H1 (cell line): ENCODE measurements at regions of chr16 and their contacts with region 1.

Region 1: GRCh38 chr16:4392382-4393239 is 21.0 kb downstream of the VASN start:
- DNase-seq: peak; percentile 59 to 89
- H3K4me3 ChIP-seq: peak overlapping the region in 2 of 4 experiments; percentile 10 to 25; a peak in 2 of 8 replicates
- H3K27ac ChIP-seq: peak overlapping the region; percentile 90
- H3K4me1 ChIP-seq: peaks cover 12 to 50% (median 43%) of the 10 kb centered on the region in 4 experiments
- H3K27me3 ChIP-seq: no peaks in the 10 kb centered on the region
- CTCF ChIP-seq: no peak; a peak in 1 of 4 replicates
- EP300 ChIP-seq: peak; percentile 8 to 91
- POLR2A ChIP-seq: peak in 1 of 2 experiments; percentile 55; a peak in 2 of 3 replicates
- RAD21 ChIP-seq: no peak

Region 2: GRCh38 chr16:4271176-4272066 is 121.2 kb before region 1 on chr16:
- CTCF ChIA-PET with region 1: interaction called, 3 read pairs
- POLR2A ChIA-PET with region 1: interaction called, 13 read pairs
- DNase-seq: peak in 1 of 2 experiments; percentile 91
- H3K4me3 ChIP-seq: peak overlapping the region; percentile 68 to 97 (median 84)
- H3K27ac ChIP-seq: peak overlapping the region; percentile 96
- H3K4me1 ChIP-seq: peaks cover 3 to 11% (median 8%) of the 10 kb centered on the region in 4 experiments
- H3K27me3 ChIP-seq: no peaks in the 10 kb centered on the region
- CTCF ChIP-seq: peak in 2 of 3 experiments; percentile 7 to 38; a peak in 3 of 4 replicates
- EP300 ChIP-seq: no peak
- POLR2A ChIP-seq: peak in 1 of 2 experiments; percentile 88
- RAD21 ChIP-seq: no peak; a peak in 1 of 4 replicates

Region 3: DNA sequence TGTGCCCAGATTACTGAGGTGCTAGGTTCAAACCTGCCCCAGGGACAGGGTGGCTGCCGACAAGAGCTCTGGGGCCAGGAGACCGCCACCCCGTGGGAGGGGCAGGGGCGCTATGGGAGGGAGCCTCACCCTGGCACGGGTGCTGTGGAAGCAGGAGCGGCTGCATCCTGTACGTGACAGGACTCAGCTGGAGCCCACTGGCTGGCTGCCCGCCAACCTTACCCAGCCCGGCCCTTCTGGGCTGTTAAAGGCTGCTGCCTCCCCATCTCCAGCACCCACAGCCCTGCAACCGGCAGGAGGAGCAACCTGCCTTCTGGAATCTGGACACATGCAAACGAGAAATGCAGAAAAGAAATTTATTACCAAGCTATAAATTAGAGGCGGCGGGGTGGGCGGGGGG is 52.7 kb before region 1 on chr16:
- CTCF ChIA-PET with region 1: interaction called, 5 read pairs
- POLR2A ChIA-PET with region 1: interaction called, 13 read pairs
- DNase-seq: no peak
- H3K4me3 ChIP-seq: no peak overlapping the region
- H3K27ac ChIP-seq: no peak overlapping the region
- H3K4me1 ChIP-seq: no peaks in the 10 kb centered on the region; a peak in 2 of 7 replicates
- H3K27me3 ChIP-seq: no peaks in the 10 kb centered on the region
- CTCF ChIP-seq: no peak
- EP300 ChIP-seq: no peak
- POLR2A ChIP-seq: no peak
- RAD21 ChIP-seq: no peak

Region 4: DNA sequence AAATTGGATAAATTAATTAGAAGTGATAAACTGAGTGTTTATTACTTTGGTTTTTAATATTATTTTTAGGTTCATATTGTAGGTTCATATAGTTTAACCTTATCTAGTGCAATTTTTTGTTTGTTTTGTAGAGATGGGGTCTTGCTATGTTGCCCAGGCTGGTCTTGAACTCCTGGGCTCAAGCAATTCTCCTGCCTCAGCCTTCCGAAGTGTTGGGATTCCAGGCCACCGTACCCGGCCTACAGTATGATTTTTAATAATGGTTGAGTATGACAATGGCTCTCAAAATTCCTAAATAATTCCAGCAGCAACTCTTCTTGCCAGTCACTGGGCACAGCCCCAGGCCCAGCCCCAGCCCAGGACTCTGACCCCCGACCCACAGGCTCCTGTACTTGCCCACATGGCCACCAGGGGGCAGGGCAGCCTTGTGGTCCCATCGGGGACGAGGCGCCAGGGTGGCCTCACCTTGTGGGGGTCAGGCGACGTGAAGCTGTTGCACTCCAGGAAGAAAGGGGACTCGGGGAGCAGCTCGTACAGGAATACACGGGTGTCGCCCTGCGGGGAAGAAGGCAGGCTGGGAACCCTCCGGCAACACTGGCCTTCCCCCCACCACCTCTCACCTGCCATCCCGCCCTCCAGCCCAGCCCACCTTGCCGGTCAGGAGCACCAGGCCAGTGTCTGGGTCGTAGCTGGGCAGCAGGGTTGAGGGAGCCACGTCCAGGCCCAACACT is 33.6 kb before region 1 on chr16:
- CTCF ChIA-PET with region 1: interaction called, 425 read pairs
- POLR2A ChIA-PET with region 1: interaction called, 14 read pairs
- DNase-seq: peak in 1 of 2 experiments; percentile 99
- H3K4me3 ChIP-seq: no peak overlapping the region
- H3K27ac ChIP-seq: no peak overlapping the region
- H3K4me1 ChIP-seq: peaks cover 0 to 3% (median 1%) of the 10 kb centered on the region in 4 experiments; a peak in 3 of 7 replicates
- H3K27me3 ChIP-seq: no peaks in the 10 kb centered on the region
- CTCF ChIP-seq: peak; percentile 90 to 98 (median 94)
- EP300 ChIP-seq: no peak
- POLR2A ChIP-seq: no peak
- RAD21 ChIP-seq: peak; percentile 94 to 98

Region 5: GRCh38 chr16:4371357-4372000 is 21.1 kb before region 1 on chr16 and contains the start of gene VASN:
- CTCF ChIA-PET with region 1: interaction called, 659 read pairs
- POLR2A ChIA-PET with region 1: interaction called, 223 read pairs
- DNase-seq: peak in 1 of 2 experiments; percentile 93
- H3K4me3 ChIP-seq: peak within 1 kb of the TSS; percentile 54 to 78 (median 59)
- H3K27ac ChIP-seq: no peak within 1 kb of the TSS
- H3K4me1 ChIP-seq: peaks cover 4 to 40% (median 34%) of the 10 kb centered on the region in 4 experiments
- H3K27me3 ChIP-seq: peaks cover 0 to 3% (median under 1%) of the 10 kb centered on the region in 4 experiments; a peak in 2 of 7 replicates
- CTCF ChIP-seq: no peak
- EP300 ChIP-seq: no peak
- POLR2A ChIP-seq: peak in 1 of 2 experiments; percentile 97; a peak in 2 of 3 replicates
- RAD21 ChIP-seq: no peak
- total RNA-seq, gene VASN: 9.6 and 10.1 TPM in 2 replicates

Region 6: DNA sequence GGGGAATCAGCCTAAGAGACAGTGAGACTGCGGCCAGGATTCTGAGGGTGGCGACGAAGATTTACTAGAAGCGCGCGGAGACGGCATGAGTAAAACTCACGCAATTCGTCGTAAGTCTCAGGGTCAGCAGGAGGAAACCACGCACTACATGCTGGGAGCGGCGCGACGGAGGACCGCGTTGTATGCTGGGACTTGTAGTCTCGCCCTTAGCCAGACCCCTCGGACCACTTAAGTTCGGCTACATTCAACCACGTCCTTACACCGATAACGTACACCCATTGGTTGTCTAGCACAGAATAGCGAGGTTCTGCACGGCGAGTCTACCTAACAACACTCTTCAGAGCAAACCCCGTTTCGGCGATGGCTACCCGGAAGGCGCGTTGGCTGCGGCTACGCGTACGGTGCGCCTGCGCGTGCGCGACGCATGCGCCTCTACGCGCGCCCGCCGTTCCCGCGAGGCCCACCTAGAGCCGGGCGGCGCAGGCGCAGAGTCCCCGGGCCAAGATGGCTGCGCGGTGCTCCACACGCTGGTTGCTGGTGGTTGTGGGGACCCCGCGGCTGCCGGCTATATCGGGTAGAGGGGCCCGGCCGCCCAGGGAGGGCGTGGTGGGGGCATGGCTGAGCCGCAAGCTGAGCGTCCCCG is 32.9 kb after region 1 on chr16 and contains the start of gene DNAJA3:
- CTCF ChIA-PET with region 1: interaction called, 3 read pairs
- POLR2A ChIA-PET with region 1: interaction called, 11 read pairs
- DNase-seq: peak; percentile 74 to 95
- H3K4me3 ChIP-seq: peak within 1 kb of the TSS; percentile 73 to 98 (median 86)
- H3K27ac ChIP-seq: peak within 1 kb of the TSS; percentile 99
- H3K4me1 ChIP-seq: peaks cover 0 to 5% (median 2%) of the 10 kb centered on the region in 4 experiments; a peak in 3 of 7 replicates
- H3K27me3 ChIP-seq: no peaks in the 10 kb centered on the region
- CTCF ChIP-seq: no peak
- EP300 ChIP-seq: no peak
- POLR2A ChIP-seq: peak; percentile 86 to 93
- RAD21 ChIP-seq: no peak
- total RNA-seq, gene DNAJA3: 58.0 and 59.1 TPM in 2 replicates